ENCODE measurements at regions of chr1 and their contacts with region 1.

Region 1: GRCh38 chr1:173867753-173868265 is at the start of gene GAS5:
- DNase-seq: peak; percentile 99
- total RNA-seq, gene GAS5: 58.0 TPM

Region 2: DNA sequence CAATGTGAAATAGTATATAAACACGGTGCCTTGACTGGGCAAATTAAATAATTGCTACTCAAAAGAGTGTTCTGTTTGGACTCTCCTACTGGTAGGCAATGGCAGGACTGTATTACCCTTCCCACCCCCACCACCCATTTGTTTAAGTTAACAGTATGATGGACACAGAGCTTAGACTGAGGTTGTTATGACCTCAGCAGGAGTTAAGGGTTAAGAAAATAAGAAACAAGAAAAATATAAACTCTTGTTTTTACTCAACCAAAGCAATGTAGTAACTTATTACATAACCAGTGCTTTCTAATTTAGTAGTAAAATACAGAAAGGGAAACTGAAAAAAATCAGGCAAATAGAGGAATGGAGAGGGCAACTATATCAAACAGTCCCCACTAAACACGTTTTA is 69.3 kb after region 1 on chr1:
- intact Hi-C with region 1: no loop called
- DNase-seq: no peak

Region 3: GRCh38 chr1:174999216-174999925 is 1131.6 kb after region 1 on chr1:
- intact Hi-C with region 1: loop called (anchors 5 kb)
- DNase-seq: peak; percentile 99

Measured in cardiac septum (tissue), 1 donor.